Mammary epithelial cell (primary cell): ENCODE measurements at regions of chr1 and their contacts with region 1.

Region 1: DNA sequence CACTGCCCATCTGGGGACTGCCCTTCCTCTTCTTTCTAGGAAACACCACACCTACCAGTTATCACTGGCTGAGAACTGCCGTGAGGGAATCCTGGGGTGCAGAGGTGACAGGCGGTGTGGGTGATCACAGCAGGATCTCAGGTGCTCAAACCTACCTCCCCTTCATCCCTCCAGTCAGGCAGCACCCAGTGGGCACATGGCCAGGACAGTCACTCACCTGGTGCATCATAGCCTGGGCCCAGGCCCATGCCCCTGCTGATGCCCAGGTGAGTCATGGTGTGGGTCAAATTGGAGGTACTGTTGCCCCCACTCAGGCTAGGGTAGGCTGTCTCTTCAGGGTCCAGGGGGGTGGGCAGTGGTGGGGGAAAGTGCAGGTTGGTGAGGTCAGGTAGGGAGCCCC is 5.3 kb upstream of the DENND4B start:
- DNase-seq: peak; percentile 60
- H3K4me3 ChIP-seq: no peak overlapping the region
- H3K27ac ChIP-seq: no peak overlapping the region
- H3K4me1 ChIP-seq: peaks cover 6% of the 10 kb centered on the region
- H3K27me3 ChIP-seq: no peaks in the 10 kb centered on the region
- CTCF ChIP-seq: no peak

Region 2: DNA sequence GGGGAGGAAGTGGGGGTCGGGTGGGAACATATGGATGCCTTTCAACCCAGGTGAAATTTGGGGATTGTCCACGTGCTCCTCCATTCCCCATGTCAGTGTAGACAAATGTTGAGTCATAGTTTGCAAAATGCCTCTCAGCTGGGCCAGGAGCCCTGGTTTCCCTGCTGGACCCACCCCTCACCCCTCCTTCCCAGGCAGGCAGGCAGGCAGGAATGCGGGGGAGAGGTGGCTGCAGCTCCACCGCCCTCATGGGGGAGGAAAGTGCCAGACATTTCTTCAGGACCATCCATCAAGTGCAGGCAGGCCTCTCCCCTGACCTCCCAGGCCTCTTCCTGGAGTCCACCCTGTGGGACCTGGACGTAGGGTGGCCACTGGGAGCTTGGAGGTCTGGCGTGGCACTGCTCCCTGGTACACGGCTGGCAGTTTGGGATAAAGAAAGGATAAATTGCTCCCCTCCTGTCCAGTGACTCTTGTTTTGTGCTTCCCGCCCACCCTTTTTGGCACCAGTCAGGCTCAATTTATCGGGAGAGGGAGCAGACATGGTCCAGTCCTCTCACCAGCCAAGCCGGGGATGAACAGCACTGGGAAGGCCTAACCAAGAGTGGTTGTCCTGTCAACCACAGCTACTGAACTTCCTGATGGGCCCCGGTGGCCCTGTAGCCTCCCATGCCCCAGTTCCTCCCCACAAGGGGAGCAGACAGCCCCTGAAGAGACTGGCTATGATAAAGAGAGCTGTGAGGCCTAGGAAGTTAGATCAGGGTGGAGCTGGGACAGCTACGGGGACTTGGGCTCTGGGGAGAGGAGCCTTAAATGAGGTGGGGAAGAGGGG is 254.4 kb before region 1 on chr1:
- CTCF ChIA-PET with region 1: no interaction called
- dilution Hi-C with region 1: no loop called
- in situ Hi-C with region 1: no loop called
- intact Hi-C with region 1: no loop called
- DNase-seq: no peak
- H3K4me3 ChIP-seq: no peak overlapping the region
- H3K27ac ChIP-seq: no peak overlapping the region
- H3K4me1 ChIP-seq: peaks cover 7% of the 10 kb centered on the region
- H3K27me3 ChIP-seq: no peaks in the 10 kb centered on the region
- CTCF ChIP-seq: no peak

Region 3: GRCh38 chr1:153796791-153797659 is 154.8 kb before region 1 on chr1:
- CTCF ChIA-PET with region 1: no interaction called
- dilution Hi-C with region 1: no loop called
- in situ Hi-C with region 1: no loop called
- intact Hi-C with region 1: loop called (anchors 1 kb)
- DNase-seq: peak; percentile 59
- H3K4me3 ChIP-seq: no peak overlapping the region
- H3K27ac ChIP-seq: no peak overlapping the region
- H3K4me1 ChIP-seq: no peaks in the 10 kb centered on the region
- H3K27me3 ChIP-seq: no peaks in the 10 kb centered on the region
- CTCF ChIP-seq: peak; percentile 88 to 90